ENCODE measurements at regions of chr6 and their contacts with region 1.

Region 1: DNA sequence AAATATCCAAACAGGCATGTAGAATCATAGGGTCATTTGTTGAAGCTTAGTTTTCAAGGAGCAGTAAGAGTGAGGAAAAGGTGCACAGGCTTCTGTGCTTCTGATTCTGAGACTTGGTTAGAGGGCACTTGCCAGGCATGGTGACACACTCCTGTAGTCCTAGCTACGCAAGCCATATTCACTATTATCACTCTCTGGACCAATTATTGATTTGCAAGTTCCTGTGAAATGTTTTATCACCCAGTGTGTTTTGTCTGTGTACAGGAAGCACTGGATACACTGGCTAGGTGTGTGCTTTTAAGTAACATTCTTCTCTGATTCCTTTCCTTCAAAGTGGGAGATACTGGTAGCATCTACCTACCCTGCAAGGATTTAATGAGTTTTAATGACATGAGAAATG is 76.3 kb downstream of the JARID2 start:
- DNase-seq: no peak
- H3K4me3 ChIP-seq: no peak overlapping the region
- H3K4me3 Mint-ChIP-seq: no peak overlapping the region
- H3K27ac Mint-ChIP-seq: no peak overlapping the region
- H3K4me1 ChIP-seq: peaks cover 13% of the 10 kb centered on the region
- H3K4me1 Mint-ChIP-seq: peaks cover 19% of the 10 kb centered on the region
- H3K27me3 ChIP-seq: no peaks in the 10 kb centered on the region
- H3K27me3 Mint-ChIP-seq: no peaks in the 10 kb centered on the region
- CTCF ChIP-seq: no peak

Region 2: GRCh38 chr6:16031278-16031981 is 709.2 kb after region 1 on chr6:
- CTCF ChIA-PET with region 1: interaction called, 11 read pairs
- POLR2A ChIA-PET with region 1: no interaction called
- intact Hi-C with region 1: no loop called
- DNase-seq: no peak
- H3K4me3 ChIP-seq: no peak overlapping the region
- H3K4me3 Mint-ChIP-seq: no peak overlapping the region
- H3K27ac Mint-ChIP-seq: no peak overlapping the region
- H3K4me1 ChIP-seq: no peaks in the 10 kb centered on the region
- H3K4me1 Mint-ChIP-seq: no peaks in the 10 kb centered on the region
- H3K27me3 ChIP-seq: no peaks in the 10 kb centered on the region
- H3K27me3 Mint-ChIP-seq: no peaks in the 10 kb centered on the region
- CTCF ChIP-seq: no peak